Sigmoid colon (tissue), 7 donors: ENCODE measurements at regions of chr15 and their contacts with region 1.

Region 1: GRCh38 chr15:73240866-73241499 is 127.8 kb downstream of the HCN4 start:
- DNase-seq: no peak
- H3K4me3 ChIP-seq: no peak overlapping the region
- H3K27ac ChIP-seq: no peak overlapping the region
- H3K4me1 ChIP-seq: peaks cover 0 to 16% (median 9%) of the 10 kb centered on the region in 4 donors
- H3K27me3 ChIP-seq: no peaks in the 10 kb centered on the region
- CTCF ChIP-seq: peak; percentile 21 to 82 (median 60)
- EP300 ChIP-seq: no peak
- POLR2A ChIP-seq: no peak

Region 2: GRCh38 chr15:73190189-73190601 is 50.8 kb before region 1 on chr15:
- intact Hi-C with region 1: no loop called
- DNase-seq: no peak
- H3K4me3 ChIP-seq: no peak overlapping the region
- H3K27ac ChIP-seq: no peak overlapping the region
- H3K4me1 ChIP-seq: peaks cover 0 to 4% (median 0%) of the 10 kb centered on the region in 4 donors
- H3K27me3 ChIP-seq: no peaks in the 10 kb centered on the region
- CTCF ChIP-seq: no peak
- EP300 ChIP-seq: no peak
- POLR2A ChIP-seq: no peak

Region 3: DNA sequence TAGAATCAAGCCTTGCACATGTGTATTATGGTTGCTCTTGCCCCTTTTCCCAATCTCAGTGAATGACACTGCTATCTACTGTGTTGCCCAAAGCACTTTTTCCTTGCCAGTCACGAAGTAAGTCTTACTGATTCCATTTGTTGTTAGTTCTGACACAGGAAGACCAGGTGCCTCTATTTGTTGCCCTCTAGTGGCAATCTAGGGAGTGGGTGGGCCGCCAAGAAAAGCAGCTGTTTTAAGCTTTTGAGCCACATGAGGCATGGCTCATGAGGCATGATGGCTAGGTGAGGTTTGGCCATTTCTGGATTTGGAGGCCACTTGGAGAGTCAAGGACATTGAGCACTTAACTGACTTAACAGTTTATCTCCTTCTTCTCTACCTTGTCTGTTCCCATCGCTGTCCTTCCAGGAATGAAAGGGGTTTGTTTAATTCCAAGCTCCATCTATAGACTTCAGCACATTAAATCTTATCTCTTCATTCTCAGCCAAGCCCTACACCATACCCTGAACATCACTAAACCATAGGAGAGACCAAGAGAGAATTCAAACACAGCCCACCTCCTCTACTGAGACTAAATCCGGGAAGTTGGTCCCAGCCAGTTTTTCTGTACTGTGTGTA is 24.7 kb after region 1 on chr15:
- intact Hi-C with region 1: loop called (anchors 2 kb)
- DNase-seq: no peak
- H3K4me3 ChIP-seq: no peak overlapping the region
- H3K27ac ChIP-seq: no peak overlapping the region
- H3K4me1 ChIP-seq: no peaks in the 10 kb centered on the region
- H3K27me3 ChIP-seq: no peaks in the 10 kb centered on the region
- CTCF ChIP-seq: peak in 2 of 4 experiments; percentile 37 to 51
- EP300 ChIP-seq: no peak
- POLR2A ChIP-seq: no peak

Region 4: DNA sequence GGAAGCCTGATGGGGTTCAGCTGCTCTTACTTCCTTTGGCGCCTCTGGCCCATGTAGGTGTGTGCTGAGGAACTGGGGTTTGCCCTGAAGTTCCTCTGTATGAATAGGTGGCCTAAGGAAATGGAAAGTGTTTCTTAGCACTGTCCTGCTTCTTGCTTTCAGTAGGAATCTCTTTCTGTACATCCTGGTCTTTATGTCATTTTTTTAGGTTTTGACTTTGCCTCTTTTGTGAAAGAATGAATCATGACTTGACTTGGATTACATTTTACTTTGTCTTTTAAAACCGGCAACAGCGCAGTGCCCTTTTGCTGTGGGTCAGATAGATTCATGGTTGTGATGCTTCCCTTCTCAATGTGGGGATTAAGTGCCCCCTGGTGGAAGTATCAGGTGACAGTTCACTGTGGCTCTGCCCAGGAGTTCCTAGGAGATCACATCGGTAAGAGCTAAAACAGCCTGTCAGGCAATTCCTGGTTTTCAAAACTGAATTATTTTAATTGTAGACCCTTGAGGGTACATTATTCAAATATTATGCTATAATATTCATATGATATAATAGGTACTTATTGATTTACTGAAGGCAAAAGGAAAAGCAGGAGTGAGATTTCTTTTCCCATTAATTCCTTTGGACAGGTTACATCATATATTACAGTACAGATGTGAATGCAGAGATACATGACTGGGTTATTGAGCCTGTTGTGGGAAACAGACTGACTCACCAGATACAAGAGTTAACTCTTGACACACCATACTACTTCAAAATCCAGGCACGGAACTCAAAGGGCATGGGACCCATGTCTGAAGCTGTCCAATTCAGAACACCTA is 32.4 kb after region 1 on chr15:
- intact Hi-C with region 1: loop called (anchors 2 kb)
- DNase-seq: peak; percentile 71
- H3K4me3 ChIP-seq: no peak overlapping the region
- H3K27ac ChIP-seq: no peak overlapping the region
- H3K4me1 ChIP-seq: peaks cover 0 to 8% (median 3%) of the 10 kb centered on the region in 4 donors
- H3K27me3 ChIP-seq: no peaks in the 10 kb centered on the region
- CTCF ChIP-seq: peak; percentile 21 to 79 (median 64)
- EP300 ChIP-seq: no peak
- POLR2A ChIP-seq: no peak